ENCODE measurements at regions of chr3 and their contacts with region 1.

Region 1: DNA sequence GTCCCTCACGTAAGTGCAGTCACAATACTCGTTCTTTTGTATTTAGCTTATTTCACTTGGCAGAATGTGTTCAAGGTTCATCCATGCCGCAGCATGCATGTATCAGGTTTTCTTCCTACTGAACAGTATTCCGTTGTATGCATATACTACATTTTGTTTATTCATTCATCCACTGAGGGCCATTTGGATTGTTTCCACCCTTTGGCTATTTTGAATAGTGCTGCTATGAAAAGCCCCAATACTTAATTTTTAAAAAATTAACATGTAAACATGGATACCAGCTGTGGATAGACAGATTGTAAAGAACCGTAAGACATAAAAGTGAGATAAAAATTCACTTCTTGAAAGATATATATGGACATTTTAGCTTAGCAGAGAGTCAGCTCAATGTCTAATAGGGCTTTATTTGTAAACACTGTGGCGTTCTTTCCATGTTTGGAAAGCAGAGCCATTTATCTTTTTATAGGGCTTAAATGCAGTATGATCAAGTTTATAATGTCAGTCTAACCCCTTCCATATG is 115.9 kb downstream of the VPS8 start:
- DNase-seq: no peak
- ATAC-seq: no peak
- H3K4me3 ChIP-seq: no peak overlapping the region
- H3K27ac ChIP-seq: no peak overlapping the region
- H3K4me1 ChIP-seq: no peaks in the 10 kb centered on the region
- H3K27me3 ChIP-seq: no peaks in the 10 kb centered on the region
- CTCF ChIP-seq: no peak

Region 2: GRCh38 chr3:184864000-184864399 is 63.9 kb before region 1 on chr3:
- intact Hi-C with region 1: loop called in 1 of 2 experiments (anchors 10 kb)
- DNase-seq: no peak
- ATAC-seq: no peak
- H3K4me3 ChIP-seq: no peak overlapping the region
- H3K27ac ChIP-seq: no peak overlapping the region
- H3K4me1 ChIP-seq: no peaks in the 10 kb centered on the region
- H3K27me3 ChIP-seq: no peaks in the 10 kb centered on the region
- CTCF ChIP-seq: no peak

Region 3: GRCh38 chr3:184907681-184908649 is 19.9 kb before region 1 on chr3:
- intact Hi-C with region 1: no loop called
- DNase-seq: peak in 1 of 2 donors; percentile 39
- ATAC-seq: no peak
- H3K4me3 ChIP-seq: no peak overlapping the region
- H3K27ac ChIP-seq: no peak overlapping the region
- H3K4me1 ChIP-seq: no peaks in the 10 kb centered on the region
- H3K27me3 ChIP-seq: no peaks in the 10 kb centered on the region
- CTCF ChIP-seq: no peak

Region 4: DNA sequence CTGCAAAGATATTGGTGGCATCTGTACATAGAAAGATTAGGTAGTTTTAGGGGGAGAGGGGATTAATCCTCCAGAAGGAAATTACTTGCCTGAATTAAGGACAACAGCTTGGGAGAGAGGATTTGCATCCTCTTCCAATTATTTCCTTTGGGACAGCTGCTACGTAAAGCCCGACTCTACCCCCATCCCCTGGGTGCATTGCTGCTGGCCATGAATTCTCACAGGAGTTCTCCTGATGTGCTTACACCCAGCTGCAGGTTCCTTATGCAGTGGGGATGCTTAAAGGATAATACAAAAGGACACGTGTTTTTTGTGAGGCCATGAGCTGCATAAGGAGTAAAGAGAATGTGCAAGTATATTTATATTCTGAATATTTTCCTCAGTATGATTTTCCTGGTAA is 16.4 kb after region 1 on chr3:
- intact Hi-C with region 1: loop called in 1 of 2 experiments (anchors 1 kb)
- DNase-seq: no peak
- ATAC-seq: no peak
- H3K4me3 ChIP-seq: no peak overlapping the region
- H3K27ac ChIP-seq: no peak overlapping the region
- H3K4me1 ChIP-seq: no peaks in the 10 kb centered on the region
- H3K27me3 ChIP-seq: no peaks in the 10 kb centered on the region
- CTCF ChIP-seq: no peak

Measured in psoas muscle (tissue), 8 donors.